ENCODE measurements at regions of chr11 and their contacts with region 1.

Region 1: DNA sequence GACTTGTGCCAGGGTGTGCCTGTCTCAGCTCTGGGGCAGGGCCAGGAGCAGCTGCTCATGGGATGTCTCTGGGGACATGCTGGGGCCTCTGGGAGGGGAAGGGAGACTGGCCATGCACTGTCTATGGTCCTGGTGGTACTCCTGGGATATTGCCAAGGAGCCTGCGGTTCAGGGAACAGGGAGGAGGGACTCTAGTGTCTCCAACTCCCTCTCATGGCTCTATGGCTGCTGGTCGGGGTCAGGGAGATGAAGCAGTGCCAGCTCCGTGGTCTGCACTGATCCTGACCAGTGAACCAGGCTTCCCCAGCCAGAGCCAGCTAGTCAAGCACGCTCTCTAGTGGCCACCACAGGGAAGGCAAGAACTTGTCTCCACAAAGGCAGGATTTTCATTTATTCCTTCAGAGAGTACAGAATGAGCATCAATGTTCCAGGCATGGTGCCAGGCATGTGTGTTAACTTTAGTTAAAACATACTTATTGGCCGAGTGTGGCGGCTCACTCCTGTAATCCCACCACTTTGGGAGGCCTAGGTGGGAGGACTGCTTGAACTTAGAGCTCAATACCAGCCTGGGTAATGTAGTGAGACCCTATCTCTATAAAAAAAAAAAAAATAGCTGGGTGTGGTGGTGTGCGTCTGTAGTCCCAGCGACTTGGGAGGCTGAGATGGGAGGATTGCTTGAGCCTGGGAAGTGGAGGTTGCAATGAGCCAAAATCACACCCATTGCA is 2.5 kb upstream of the BEST1 start:
- DNase-seq: peak; percentile 73
- H3K4me3 Mint-ChIP-seq: no peak overlapping the region
- H3K27ac Mint-ChIP-seq: no peak overlapping the region
- H3K4me1 Mint-ChIP-seq: peaks cover 2% of the 10 kb centered on the region
- H3K27me3 Mint-ChIP-seq: peaks cover 5% of the 10 kb centered on the region

Region 2: DNA sequence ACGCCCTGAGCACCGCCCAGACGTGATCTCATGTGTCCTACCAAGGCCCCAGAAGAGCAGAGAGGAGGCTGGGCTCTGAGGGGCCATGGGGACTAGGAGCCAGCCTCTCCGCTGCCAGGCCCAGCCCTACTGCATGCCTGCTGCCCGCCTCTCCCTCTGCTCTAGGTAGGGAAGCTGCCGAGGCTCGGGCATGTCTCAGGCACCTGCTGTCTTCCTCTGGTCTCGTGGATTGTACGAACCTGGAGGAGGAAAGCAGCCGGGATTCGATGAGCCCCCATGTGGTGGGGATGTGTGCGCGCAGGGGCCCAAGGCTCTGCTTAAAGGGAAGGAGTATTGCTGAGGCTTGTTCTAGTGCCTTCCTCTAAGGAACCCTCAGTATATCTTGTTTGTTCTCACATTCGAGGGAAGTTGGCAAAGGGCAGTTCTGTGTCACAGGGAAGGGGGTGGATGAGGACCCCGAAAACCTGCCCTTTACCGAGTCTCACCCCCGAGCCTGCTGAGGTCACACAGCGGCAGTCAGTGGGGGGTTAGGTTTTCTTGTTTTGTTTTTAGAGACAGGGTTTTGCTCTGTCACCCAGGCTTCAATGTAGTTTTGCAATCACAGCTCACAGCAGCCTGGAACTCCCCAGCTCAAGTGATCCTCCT is 246.3 kb before region 1 on chr11:
- CTCF ChIA-PET with region 1: no interaction called
- POLR2A ChIA-PET with region 1: no interaction called
- DNase-seq: no peak
- H3K4me3 Mint-ChIP-seq: no peak overlapping the region
- H3K27ac Mint-ChIP-seq: no peak overlapping the region
- H3K4me1 Mint-ChIP-seq: peaks cover 36% of the 10 kb centered on the region
- H3K27me3 Mint-ChIP-seq: peaks cover 3% of the 10 kb centered on the region

Region 3: DNA sequence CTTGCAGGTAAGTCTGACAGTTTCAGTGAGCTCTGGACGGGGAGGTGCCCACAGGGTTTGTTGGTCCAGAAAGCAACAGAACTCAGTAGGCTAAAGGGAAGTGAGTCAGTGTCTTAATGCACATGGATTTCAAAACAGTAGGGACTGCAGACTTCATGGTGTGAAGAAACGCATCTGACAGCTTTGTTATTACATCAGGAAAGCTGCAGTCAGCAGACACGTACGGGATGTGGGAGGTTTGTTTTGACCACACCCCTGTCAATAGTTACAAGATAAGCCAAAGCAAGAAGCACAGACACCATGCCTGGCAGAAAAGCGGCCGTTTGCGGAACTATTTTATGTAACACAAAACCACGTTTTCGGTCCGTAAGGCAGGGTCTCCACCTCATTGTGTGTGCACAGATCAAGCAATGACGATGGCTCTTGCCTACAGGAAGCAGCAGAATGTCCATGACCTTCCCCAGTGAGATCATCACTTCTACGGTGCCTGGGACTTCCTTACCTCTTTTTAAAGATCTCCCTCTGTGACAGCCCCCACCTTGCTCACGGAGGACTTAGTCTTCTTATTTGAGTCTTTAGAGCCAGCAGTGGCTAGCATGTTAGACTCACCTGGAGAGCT is 77.9 kb after region 1 on chr11:
- CTCF ChIA-PET with region 1: interaction called, 12 read pairs
- POLR2A ChIA-PET with region 1: no interaction called
- DNase-seq: peak; percentile 89
- H3K4me3 Mint-ChIP-seq: peak overlapping the region; percentile 45
- H3K27ac Mint-ChIP-seq: peak overlapping the region; percentile 99
- H3K4me1 Mint-ChIP-seq: peaks cover 24% of the 10 kb centered on the region
- H3K27me3 Mint-ChIP-seq: no peaks in the 10 kb centered on the region